Colonic mucosa (tissue), 4 donors: ENCODE measurements at regions of chr5 and their contacts with region 1.

Region 1: DNA sequence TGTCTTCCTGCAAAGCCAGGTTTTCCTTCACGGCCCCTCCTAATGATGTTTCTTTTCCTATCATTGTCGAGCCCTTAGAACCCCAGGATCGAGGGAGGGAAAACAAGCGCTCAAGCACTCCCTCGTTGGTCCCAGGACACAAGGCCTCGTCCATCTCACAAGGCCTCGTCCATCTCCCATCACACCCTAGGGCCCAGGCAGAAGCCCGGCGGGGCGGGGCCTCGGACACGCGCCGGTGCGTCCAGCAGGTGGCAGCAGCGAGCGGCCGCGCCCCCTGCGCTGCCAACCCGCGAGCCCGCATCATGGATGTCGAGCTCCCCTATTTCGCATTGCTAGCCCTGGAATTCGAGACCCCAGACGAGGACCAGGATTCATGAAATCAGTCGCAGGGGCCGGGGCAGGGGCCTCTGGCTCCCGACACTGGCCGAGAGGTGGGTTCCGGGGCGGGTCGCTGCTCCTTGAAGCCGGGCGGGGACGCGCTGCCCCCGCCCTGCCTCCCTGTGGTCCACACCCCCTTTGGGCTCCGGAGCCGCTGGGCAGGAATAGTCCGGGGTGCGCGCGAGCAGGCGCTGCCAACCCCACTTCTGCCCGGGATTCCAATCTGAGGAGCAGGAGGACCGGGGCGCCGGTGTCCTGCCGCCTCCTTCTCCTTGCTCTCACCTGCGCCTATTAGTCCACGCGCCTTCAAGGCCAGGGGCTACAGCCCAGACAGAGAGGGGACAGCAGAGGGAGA is at the start of gene ABLIM3:
- DNase-seq: peak; percentile 58
- H3K4me3 ChIP-seq: peak within 1 kb of the TSS; percentile 69
- H3K27ac ChIP-seq: no peak within 1 kb of the TSS
- H3K4me1 ChIP-seq: no peaks in the 10 kb centered on the region
- H3K27me3 ChIP-seq: no peaks in the 10 kb centered on the region
- CTCF ChIP-seq: peak; percentile 89
- total RNA-seq, gene ABLIM3: 2.3 to 4.1 TPM

Region 2: DNA sequence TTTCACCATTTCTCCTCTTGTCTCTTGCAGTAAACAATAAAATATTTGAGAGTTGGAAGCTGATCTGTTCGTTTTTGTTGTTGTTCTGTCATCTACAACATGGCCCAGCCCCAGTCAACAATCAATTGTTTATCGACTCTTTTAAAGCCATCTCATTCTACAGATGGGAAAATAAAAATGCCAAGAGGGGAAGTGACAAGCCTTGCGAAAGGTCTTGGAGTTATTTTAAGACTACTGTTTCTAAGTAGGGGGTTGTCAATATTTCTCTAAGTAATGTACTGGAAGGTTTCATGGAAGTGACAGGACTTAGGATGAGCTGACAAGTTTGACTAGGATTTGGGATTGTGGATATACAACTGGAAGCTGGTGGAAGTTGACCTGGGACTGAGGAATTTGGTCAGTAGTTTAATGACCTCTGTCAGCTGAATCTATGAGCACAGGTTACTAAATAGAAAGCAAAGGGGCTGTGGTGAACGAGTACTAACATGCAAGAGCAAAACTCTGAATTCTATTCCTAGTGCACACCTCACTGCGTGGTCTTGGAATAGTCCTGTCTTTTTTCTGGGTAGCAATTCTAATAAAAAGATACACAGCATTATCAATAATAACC is 372.5 kb before region 1 on chr5:
- intact Hi-C with region 1: no loop called
- DNase-seq: no peak
- H3K4me3 ChIP-seq: no peak overlapping the region
- H3K27ac ChIP-seq: no peak overlapping the region
- H3K4me1 ChIP-seq: no peaks in the 10 kb centered on the region
- H3K27me3 ChIP-seq: no peaks in the 10 kb centered on the region
- CTCF ChIP-seq: no peak

Region 3: DNA sequence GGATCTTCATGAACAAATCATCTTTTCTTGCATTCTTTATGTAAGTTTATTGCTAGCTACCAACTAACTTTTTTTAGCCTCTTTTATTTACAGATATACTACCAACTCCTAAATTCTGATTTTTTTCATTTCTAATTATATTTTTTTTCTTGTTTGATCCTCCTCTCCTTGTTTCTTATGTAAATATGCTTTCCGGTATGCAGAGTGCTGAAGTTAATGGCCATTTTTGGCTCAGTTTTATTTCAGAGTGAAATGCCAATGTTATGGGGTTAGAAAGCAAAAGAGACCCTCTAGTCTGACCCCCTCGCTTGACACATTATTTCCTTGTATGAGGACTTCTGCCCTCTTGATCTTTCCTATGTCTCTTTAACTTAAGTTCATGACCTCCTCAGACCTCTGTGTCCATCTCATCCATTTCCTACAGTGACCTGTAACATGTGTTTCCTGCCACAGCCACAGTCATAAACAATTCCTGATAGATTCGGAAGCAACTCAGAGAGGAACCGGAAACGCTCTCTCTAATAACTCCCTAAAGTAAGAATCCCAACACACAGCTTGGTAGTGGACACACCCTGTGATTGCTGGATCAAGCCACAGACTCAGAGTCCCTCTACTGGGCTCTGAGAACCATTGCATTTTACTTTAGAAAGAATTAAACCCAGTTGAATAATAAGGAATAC is 87.4 kb after region 1 on chr5:
- intact Hi-C with region 1: loop called (anchors 2 kb)
- DNase-seq: peak; percentile 31
- H3K4me3 ChIP-seq: no peak overlapping the region
- H3K27ac ChIP-seq: no peak overlapping the region
- H3K4me1 ChIP-seq: peaks cover 5% of the 10 kb centered on the region
- H3K27me3 ChIP-seq: no peaks in the 10 kb centered on the region
- CTCF ChIP-seq: peak; percentile 71